ENCODE measurements at regions of chr1 and their contacts with region 1.

Region 1: DNA sequence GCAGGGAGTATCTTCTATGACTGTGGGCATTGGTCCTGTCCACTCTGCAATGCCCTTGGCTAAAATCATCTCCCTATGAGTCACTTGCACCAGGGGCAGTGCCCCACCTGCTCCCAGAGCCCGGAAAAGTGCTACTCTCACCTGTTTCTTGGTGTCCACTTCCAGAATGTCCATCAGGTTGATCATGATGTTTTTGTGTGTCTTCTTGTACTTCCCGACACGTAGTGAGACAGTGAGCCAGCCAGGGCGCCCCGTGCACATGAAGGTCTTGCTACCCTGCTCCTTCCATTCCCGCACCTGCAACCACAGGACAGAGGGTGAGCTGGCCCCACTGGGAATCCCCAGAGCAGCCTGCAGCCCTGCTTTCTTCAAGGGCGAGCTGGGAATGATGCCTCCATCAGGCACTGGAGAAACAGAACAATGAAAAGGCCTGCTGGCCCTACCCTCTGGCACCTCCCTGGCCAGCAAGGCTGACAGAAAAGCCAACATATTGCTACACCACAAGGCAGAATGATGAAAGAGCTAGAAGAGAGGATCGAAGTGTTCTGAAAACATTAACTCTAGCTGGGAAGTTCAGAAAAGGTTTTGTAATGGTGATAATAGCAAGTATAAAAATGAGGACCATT is 3.4 kb downstream of the DHCR24 start:
- DNase-seq: peak in 1 of 2 donors; percentile 47
- H3K4me3 ChIP-seq: peak overlapping the region in 2 of 3 donors; percentile 0 to 39
- H3K27ac ChIP-seq: peak overlapping the region; percentile 78 to 84
- H3K4me1 ChIP-seq: no peaks in the 10 kb centered on the region
- H3K27me3 ChIP-seq: no peaks in the 10 kb centered on the region
- CTCF ChIP-seq: no peak
- POLR2A ChIP-seq: no peak

Region 2: DNA sequence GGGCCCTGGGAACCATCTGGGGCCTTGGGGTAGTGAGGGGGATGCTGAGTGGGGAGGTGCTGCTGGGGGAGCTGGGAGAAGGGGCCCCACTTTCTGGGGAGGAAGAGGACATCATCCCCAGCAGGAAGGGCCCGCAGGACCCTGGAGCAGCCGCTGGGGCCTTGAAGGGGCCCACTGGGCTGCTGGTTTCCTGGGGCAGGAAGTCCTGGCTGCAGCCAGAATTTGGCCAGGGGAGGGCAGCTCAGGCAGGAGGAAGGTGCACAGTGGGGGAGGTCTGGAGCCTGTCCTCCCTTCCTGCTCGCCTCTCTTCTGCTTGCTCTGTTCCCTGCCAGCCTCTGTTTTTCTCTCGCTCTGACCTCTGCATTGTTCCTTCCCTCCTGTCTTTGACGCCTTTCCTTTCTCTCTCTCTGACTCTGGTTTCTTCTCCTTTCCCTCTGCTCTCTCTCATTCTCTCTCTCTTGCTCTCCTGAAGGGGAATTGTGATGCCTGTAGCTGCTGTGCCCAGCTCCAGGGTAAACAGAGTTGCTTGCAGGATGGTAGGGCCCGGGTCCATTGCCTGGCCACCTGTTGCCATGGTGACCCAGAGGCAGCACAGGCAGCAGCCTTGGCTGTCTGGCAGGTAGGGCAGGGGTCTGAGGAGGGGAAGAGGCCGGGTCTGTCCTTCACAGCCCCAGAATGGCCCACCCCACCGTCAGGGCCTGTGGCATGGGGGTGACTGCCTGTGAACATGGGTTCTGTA is 311.6 kb before region 1 on chr1:
- intact Hi-C with region 1: loop called (anchors 5 kb)
- DNase-seq: no peak
- H3K4me3 ChIP-seq: no peak overlapping the region
- H3K27ac ChIP-seq: peak overlapping the region; percentile 65 to 75
- H3K4me1 ChIP-seq: no peaks in the 10 kb centered on the region
- H3K27me3 ChIP-seq: no peaks in the 10 kb centered on the region
- CTCF ChIP-seq: no peak
- POLR2A ChIP-seq: no peak

Region 3: DNA sequence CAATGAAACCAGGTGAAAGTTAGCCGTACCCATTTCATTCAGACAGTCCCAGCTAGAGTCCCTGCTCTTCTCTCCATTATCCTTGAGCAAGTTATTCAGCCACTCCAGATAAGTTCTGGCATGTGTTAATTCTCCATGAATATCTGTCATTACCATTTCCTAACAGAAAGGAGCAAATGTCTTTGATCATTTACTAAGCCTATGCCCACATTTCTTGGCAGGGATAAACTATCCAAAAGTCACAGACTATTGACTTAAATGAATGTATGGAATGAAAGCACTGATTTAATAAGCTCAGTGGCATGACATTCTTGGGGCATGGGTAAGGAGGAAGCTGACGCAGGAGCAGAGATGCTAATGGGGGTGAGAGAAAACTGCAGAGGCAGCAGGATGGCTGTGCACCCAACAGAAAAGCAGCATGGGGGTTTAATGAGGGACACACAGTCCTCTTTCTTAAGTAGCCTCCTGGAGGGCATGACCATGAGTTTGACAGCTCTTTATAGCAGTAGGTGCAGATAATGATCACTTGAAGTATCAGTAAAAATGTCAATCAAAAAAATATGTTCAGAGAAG is 21.0 kb after region 1 on chr1:
- intact Hi-C with region 1: no loop called
- DNase-seq: no peak
- H3K4me3 ChIP-seq: no peak overlapping the region
- H3K27ac ChIP-seq: no peak overlapping the region
- H3K4me1 ChIP-seq: no peaks in the 10 kb centered on the region
- H3K27me3 ChIP-seq: no peaks in the 10 kb centered on the region
- CTCF ChIP-seq: no peak
- POLR2A ChIP-seq: no peak

Measured in breast epithelium (tissue), 4 donors.